WTC11 (cell line): ENCODE measurements at regions of chr1 and their contacts with region 1.

Region 1: GRCh38 chr1:210448297-210448892 is 119.7 kb downstream of the HHAT start:
- DNase-seq: no peak
- ATAC-seq: peak; percentile 87
- H3K4me3 Mint-ChIP-seq: no peak overlapping the region
- H3K27ac Mint-ChIP-seq: no peak overlapping the region
- H3K4me1 Mint-ChIP-seq: peaks cover 23% of the 10 kb centered on the region
- H3K27me3 Mint-ChIP-seq: no peaks in the 10 kb centered on the region
- CTCF ChIP-seq: peak; percentile 57; the same call in 1 of the 2 replicates

Region 2: DNA sequence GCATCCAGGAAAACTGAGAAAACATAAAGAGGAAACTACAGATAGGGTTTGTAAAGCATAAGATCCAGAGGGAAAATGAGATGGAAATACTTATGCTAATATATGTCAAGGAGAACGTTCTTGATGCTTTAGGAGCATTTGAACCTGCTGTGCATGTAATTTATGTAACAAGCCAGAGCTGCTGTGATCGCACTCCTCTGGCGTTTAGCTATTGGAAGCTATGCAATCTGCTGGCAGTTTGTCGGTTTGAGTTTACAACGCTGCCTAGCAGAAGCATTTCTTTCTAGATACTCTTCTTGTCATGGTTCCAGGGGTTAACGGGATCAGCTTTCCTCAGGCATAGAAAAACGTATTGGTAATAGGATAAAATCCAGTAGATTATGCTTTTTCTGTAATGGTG is 502.9 kb after region 1 on chr1:
- CTCF ChIA-PET with region 1: interaction called, 12 read pairs
- POLR2A ChIA-PET with region 1: no interaction called
- DNase-seq: no peak
- ATAC-seq: peak; percentile 20; the same call in 1 of the 2 replicates
- H3K4me3 Mint-ChIP-seq: no peak overlapping the region
- H3K27ac Mint-ChIP-seq: no peak overlapping the region
- H3K4me1 Mint-ChIP-seq: no peaks in the 10 kb centered on the region
- H3K27me3 Mint-ChIP-seq: no peaks in the 10 kb centered on the region; the same call in 1 of the 2 replicates
- CTCF ChIP-seq: no peak